CD8-positive, alpha-beta T cell (primary cell): ENCODE measurements at regions of chr22 and their contacts with region 1.

Region 1: GRCh38 chr22:39240828-39241793 is 3.7 kb downstream of the PDGFB start:
- DNase-seq: peak in 6 of 9 experiments; percentile 14 to 76 (median 60)
- ATAC-seq: peak; percentile 9
- H3K4me3 ChIP-seq: peak overlapping the region; percentile 17 to 44
- H3K4me3 Mint-ChIP-seq: peak overlapping the region; percentile 93
- H3K27ac ChIP-seq: peak overlapping the region; percentile 21 to 54
- H3K27ac Mint-ChIP-seq: peak overlapping the region; percentile 95
- H3K4me1 ChIP-seq: peaks cover 60% of the 10 kb centered on the region
- H3K4me1 Mint-ChIP-seq: peaks cover 65% of the 10 kb centered on the region
- H3K27me3 ChIP-seq: peaks cover 3 to 20% of the 10 kb centered on the region in 2 experiments
- H3K27me3 Mint-ChIP-seq: peaks cover 2% of the 10 kb centered on the region
- CTCF ChIP-seq: no peak

Region 2: GRCh38 chr22:39152511-39153219 is 88.4 kb before region 1 on chr22 and contains the start of gene CBX7:
- CTCF ChIA-PET with region 1: no interaction called
- POLR2A ChIA-PET with region 1: interaction called, 5 read pairs
- intact Hi-C with region 1: loop called (anchors 1 kb)
- DNase-seq: peak; percentile 84 to 99 (median 92)
- ATAC-seq: peak; percentile 82
- H3K4me3 ChIP-seq: peak within 1 kb of the TSS; percentile 83 to 89
- H3K4me3 Mint-ChIP-seq: peak within 1 kb of the TSS; percentile 92
- H3K27ac ChIP-seq: peak within 1 kb of the TSS; percentile 86 to 87
- H3K27ac Mint-ChIP-seq: peak within 1 kb of the TSS; percentile 91
- H3K4me1 ChIP-seq: peaks cover 51% of the 10 kb centered on the region
- H3K4me1 Mint-ChIP-seq: peaks cover 42% of the 10 kb centered on the region
- H3K27me3 ChIP-seq: no peaks in the 10 kb centered on the region
- H3K27me3 Mint-ChIP-seq: no peaks in the 10 kb centered on the region
- CTCF ChIP-seq: no peak
- total RNA-seq, gene CBX7: 34.2 to 37.2 TPM

Region 3: DNA sequence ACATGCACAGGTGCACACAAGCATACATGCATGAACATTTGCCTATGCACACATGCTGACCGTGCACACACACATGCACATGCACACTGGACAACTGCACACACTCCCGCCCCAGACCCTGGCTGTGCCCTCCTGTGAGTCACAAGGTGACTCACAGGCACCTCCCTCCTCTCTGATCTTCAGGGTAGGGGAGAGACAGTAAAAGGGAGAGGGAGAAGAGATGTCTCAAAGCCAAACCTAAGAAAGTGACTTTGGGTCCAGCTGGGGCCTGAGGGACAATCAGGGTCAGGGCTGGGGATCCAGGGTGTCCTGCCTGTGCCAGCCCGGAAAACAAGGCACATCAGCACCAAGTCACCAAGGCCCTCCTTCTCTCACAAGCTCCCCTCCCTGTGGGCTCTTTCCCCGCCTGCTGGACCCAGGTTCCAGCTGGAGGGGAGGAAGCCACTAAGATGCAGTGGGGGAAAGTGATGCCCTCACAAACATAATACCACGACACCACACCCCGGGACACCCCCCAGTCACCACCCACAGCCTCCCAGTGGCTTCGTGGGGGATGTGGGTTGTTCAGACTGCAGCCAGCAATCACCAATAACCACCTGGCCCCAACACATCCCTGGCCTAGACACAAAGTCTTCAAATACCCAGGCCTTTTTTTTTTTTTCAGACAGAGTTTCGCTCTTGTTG is 35.6 kb before region 1 on chr22:
- CTCF ChIA-PET with region 1: no interaction called
- POLR2A ChIA-PET with region 1: interaction called, 4 read pairs
- intact Hi-C with region 1: loop called in 1 of 2 experiments (anchors 5 kb)
- DNase-seq: peak; percentile 18 to 89 (median 61)
- ATAC-seq: peak; percentile 82
- H3K4me3 ChIP-seq: peak overlapping the region in 1 of 2 experiments; percentile 7
- H3K4me3 Mint-ChIP-seq: peak overlapping the region; percentile 22
- H3K27ac ChIP-seq: peak overlapping the region in 1 of 2 experiments; percentile 21
- H3K27ac Mint-ChIP-seq: peak overlapping the region; percentile 84
- H3K4me1 ChIP-seq: peaks cover 7% of the 10 kb centered on the region
- H3K4me1 Mint-ChIP-seq: peaks cover 21% of the 10 kb centered on the region
- H3K27me3 ChIP-seq: no peaks in the 10 kb centered on the region
- H3K27me3 Mint-ChIP-seq: peaks cover 2% of the 10 kb centered on the region
- CTCF ChIP-seq: no peak

Region 4: GRCh38 chr22:39446295-39446721 is 205.2 kb after region 1 on chr22:
- CTCF ChIA-PET with region 1: no interaction called
- POLR2A ChIA-PET with region 1: no interaction called
- intact Hi-C with region 1: no loop called
- DNase-seq: peak in 1 of 9 experiments; percentile 37
- ATAC-seq: peak; percentile 40
- H3K4me3 ChIP-seq: no peak overlapping the region
- H3K4me3 Mint-ChIP-seq: peak overlapping the region; percentile 59
- H3K27ac ChIP-seq: no peak overlapping the region
- H3K27ac Mint-ChIP-seq: peak overlapping the region; percentile 20
- H3K4me1 ChIP-seq: peaks cover 42% of the 10 kb centered on the region
- H3K4me1 Mint-ChIP-seq: peaks cover 29% of the 10 kb centered on the region
- H3K27me3 ChIP-seq: no peaks in the 10 kb centered on the region
- H3K27me3 Mint-ChIP-seq: peaks cover 3% of the 10 kb centered on the region
- CTCF ChIP-seq: no peak